ENCODE measurements at regions of chr10 and their contacts with region 1.

Region 1: GRCh38 chr10:100562008-100562711 is 26.4 kb downstream of the HIF1AN start:
- DNase-seq: peak; percentile 5
- H3K4me3 ChIP-seq: no peak overlapping the region
- H3K27ac ChIP-seq: no peak overlapping the region
- H3K4me1 ChIP-seq: peaks cover 3% of the 10 kb centered on the region
- H3K27me3 ChIP-seq: peaks cover 47% of the 10 kb centered on the region
- CTCF ChIP-seq: peak; percentile 93 to 100 (median 97)

Region 2: DNA sequence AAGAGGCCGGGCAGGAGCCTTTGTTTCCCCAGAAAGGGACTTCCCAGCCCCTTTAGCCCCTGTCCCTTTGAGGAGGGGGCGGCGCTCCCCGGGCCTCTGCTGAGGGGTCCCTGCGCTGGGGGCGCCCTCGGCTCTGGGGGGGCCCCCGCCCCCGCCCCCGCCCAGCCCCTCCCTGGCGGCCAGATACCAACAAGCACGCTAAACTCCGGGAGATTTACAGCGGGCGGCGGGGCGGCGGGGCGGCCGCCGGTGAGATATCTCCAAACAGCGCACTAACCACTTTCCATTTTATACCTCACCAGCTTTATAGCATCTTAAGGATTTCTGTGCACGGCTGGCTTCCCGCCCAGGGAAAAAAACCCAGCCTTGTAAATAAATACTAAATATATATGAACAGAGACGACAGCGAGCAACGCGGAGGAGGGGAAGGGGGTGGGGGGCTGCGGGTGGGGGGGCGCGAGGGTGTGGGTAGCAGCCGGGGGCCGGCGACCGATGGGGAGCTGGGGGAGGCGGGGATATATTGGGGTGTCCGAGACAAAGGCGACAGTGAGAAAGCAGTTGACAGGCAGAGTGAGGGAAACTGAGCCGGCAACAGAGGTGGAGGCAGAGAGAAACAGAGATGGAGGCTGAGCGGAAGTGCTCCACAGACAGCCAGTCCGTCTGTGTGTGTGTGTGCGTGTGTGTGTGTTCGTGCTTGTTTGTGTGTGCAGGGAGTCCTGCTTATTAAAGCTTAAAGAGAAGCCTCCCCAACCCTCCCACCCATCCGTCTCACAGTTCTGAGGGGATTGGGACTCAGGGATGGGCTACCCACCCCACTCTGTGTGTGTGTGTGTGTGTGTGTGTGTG is 59.4 kb after region 1 on chr10:
- dilution Hi-C with region 1: no loop called
- DNase-seq: no peak
- H3K4me3 ChIP-seq: no peak overlapping the region
- H3K27ac ChIP-seq: no peak overlapping the region
- H3K4me1 ChIP-seq: no peaks in the 10 kb centered on the region
- H3K27me3 ChIP-seq: peaks cover 55% of the 10 kb centered on the region
- CTCF ChIP-seq: no peak

Region 3: DNA sequence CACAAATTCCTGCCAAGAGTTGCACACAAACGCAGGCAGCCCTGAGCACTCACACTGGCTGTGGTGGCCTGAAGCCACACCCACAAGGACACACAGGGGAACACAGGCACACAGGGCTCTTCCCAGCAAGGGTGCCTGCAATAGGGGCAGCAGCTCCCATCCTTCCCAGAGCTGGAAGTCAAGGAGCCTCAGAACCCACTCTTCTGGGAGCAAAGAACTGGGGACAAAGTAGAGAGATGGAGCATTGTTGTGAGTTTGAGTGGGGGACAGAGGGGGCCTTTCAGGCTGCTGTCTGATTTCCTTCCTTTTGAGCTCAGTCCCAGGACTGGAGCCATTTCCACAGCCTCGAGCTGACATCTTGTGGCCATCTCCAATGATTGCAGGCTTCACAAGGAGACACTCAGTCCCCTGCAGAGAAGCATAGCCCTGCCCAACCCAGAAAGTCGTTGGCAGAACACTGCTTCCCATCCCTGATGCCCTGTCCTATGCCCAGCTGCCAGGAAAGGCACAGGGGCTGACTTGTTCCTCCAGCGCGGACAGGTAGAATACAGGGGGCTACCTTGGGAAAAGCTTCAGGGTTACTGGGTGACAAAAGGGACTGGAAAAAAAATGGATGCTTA is 316.2 kb after region 1 on chr10:
- dilution Hi-C with region 1: loop called (anchors 25 kb)
- DNase-seq: no peak
- H3K4me3 ChIP-seq: no peak overlapping the region
- H3K27ac ChIP-seq: no peak overlapping the region
- H3K4me1 ChIP-seq: no peaks in the 10 kb centered on the region
- H3K27me3 ChIP-seq: peaks cover 27% of the 10 kb centered on the region
- CTCF ChIP-seq: peak; percentile 75 to 85 (median 76)